ENCODE measurements at regions of chr13 and their contacts with region 1.

Region 1: DNA sequence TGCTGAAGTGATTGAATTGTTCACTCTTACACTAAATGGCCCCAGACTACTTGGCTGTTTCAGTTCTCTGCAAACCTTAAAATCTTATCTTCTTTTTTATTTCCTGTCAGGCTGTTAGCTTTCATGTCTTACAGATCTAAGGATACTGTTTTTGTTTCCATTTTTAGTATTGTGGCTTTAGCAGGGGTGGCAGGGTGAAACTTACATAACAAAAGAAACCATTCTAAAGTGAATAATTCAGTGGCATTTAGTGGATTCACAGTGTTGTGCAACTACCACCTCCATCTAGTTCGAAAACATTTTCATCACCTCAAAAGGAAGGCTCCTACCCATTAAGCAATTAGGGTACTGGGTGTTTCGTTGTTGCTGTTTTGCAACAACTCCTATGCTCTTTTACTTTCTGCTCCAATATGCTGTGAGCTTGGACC is 19.8 kb downstream of the TMEM272 start:
- DNase-seq: no peak
- H3K4me3 Mint-ChIP-seq: peak overlapping the region; percentile 77
- H3K27ac Mint-ChIP-seq: peak overlapping the region; percentile 98
- H3K4me1 Mint-ChIP-seq: peaks cover 84% of the 10 kb centered on the region
- H3K27me3 Mint-ChIP-seq: no peaks in the 10 kb centered on the region

Region 2: GRCh38 chr13:50893211-50893852 is 931.8 kb before region 1 on chr13:
- CTCF ChIA-PET with region 1: no interaction called
- intact Hi-C with region 1: loop called (anchors 10 kb)
- DNase-seq: peak; percentile 41
- H3K4me3 Mint-ChIP-seq: peak overlapping the region; percentile 36
- H3K27ac Mint-ChIP-seq: peak overlapping the region; percentile 79
- H3K4me1 Mint-ChIP-seq: peaks cover 38% of the 10 kb centered on the region
- H3K27me3 Mint-ChIP-seq: no peaks in the 10 kb centered on the region

Region 3: GRCh38 chr13:51625555-51626345 is 199.4 kb before region 1 on chr13:
- CTCF ChIA-PET with region 1: no interaction called
- intact Hi-C with region 1: no loop called
- DNase-seq: no peak
- H3K4me3 Mint-ChIP-seq: no peak overlapping the region
- H3K27ac Mint-ChIP-seq: no peak overlapping the region
- H3K4me1 Mint-ChIP-seq: peaks cover 40% of the 10 kb centered on the region
- H3K27me3 Mint-ChIP-seq: no peaks in the 10 kb centered on the region

Region 4: DNA sequence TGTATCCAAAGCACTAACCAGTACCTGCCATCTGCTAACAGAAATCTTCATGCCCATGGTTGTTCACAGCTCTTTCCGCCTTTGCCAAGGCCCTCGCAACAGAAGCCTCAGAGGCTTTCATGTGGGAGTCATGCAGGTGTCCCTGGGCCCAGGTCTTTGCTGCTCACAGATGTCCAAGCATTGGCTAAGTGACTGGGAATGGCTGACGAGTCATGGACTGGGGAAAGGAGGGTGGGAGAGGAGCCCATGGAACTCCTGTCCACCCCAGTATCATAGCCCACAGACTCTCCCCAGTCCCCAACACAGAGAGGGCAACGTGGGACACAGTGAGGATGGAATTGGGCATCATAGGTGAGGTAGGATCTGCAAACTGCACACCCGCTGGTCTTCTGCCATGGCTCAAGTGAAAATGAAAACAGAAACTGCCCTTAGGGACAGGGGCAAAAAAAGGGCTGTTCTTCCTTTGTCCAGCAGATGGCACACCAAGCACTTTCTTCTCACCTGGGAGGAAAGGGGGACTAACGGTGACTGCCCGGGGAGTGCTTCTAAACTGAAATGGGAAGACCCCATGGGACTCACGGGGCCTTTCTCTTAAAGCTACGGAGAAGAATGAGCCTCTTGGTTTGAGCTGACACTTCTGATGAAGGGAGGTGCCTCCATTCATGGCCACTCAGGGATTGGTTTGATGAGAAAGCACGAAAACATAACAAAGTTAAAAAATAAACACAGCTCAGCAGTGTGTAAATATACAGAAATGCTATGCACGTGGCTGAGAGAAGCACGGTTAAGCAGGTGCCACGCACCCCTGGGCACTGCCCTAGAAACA is 10.1 kb before region 1 on chr13:
- CTCF ChIA-PET with region 1: interaction called, 136 read pairs
- intact Hi-C with region 1: loop called (anchors 1 kb)
- DNase-seq: peak; percentile 89
- H3K4me3 Mint-ChIP-seq: peak overlapping the region; percentile 62
- H3K27ac Mint-ChIP-seq: peak overlapping the region; percentile 87
- H3K4me1 Mint-ChIP-seq: peaks cover 86% of the 10 kb centered on the region
- H3K27me3 Mint-ChIP-seq: no peaks in the 10 kb centered on the region

Region 5: DNA sequence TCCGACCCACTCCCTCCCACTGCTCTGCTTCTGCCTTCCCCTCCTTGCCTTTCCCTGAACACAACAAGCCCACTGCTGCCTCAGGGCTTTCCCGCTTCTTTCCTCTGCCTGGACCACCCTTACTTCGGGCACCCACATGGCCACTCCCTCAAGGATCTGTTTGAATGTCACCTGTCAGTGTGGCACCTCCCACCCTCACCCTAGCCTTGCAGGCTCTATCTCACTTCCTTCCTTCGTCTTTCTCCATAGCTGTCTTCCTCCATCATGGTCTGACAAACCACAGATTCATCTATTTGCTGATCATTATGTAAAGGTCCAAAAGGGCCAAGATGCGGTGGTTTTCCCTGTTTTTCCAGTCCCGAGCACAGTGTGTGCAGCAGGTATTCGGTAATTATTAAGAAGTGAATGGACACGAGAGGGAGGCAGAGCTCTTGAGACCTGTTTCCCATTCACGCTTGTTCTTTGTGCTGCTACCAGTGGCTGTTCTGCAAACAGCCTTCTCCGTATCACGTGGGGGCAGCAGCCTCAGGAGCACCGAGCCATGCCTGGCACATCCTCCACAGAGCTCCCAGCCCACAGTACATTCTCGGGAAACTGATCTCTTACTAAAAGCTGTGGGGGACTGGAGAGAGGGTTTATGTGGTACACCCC is 86.8 kb after region 1 on chr13:
- CTCF ChIA-PET with region 1: no interaction called
- intact Hi-C with region 1: loop called (anchors 1 kb)
- DNase-seq: no peak
- H3K4me3 Mint-ChIP-seq: no peak overlapping the region
- H3K27ac Mint-ChIP-seq: no peak overlapping the region
- H3K4me1 Mint-ChIP-seq: peaks cover 29% of the 10 kb centered on the region
- H3K27me3 Mint-ChIP-seq: peaks cover 6% of the 10 kb centered on the region

Region 6: GRCh38 chr13:52194184-52194868 is 369.1 kb after region 1 on chr13:
- CTCF ChIA-PET with region 1: no interaction called
- intact Hi-C with region 1: loop called (anchors 2 kb)
- DNase-seq: peak; percentile 90
- H3K4me3 Mint-ChIP-seq: peak overlapping the region; percentile 98
- H3K27ac Mint-ChIP-seq: peak overlapping the region; percentile 97
- H3K4me1 Mint-ChIP-seq: peaks cover 30% of the 10 kb centered on the region
- H3K27me3 Mint-ChIP-seq: no peaks in the 10 kb centered on the region